Naive thymus-derived CD4-positive, alpha-beta T cell (primary cell): ENCODE measurements at regions of chr16 and their contacts with region 1.

Region 1: DNA sequence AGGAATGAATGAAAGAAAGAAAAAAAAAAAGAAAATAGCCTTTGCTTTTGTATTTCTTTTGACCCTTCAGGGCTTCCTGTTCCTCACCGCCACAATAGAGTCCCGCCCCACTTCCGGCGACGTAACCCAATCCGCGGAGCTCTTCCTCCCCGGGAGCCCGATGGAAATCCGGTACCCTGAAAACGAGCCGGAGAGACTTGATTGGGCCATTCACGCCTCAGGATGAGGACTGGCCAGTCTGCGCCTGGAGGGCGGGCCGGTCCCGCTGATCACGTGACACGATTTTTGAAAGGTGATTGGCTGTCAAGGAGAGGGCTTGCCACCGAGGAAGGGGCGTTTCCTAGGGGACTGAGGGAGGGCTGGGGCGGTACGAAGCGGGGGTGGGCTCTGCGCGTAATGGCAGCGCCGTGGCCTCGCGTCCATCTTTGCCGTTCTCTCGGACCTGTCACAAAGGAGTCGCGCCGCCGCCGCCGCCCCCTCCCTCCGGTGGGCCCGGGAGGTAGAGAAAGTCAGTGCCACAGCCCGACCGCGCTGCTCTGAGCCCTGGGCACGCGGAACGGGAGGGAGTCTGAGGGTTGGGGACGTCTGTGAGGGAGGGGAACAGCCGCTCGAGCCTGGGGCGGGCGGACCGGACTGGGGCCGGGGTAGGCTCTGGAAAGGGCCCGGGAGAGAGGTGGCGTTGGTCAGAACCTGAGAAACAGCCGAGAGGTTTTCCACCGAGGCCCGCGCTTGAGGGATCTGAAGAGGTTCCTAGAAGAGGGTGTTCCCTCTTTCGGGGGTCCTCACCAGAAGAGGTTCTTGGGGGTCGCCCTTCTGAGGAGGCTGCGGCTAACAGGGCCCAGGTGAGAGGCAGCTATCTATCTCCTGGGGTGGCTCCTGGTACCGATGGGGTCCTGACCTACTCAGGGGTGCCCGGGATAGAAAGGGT is at the starts of genes PSME3IP1 and RSPRY1:
- DNase-seq: peak; percentile 86 to 100 (median 99)
- ATAC-seq: peak; percentile 92
- H3K4me3 ChIP-seq: peak within 1 kb of the TSS; percentile 95
- H3K4me3 Mint-ChIP-seq: peak within 1 kb of the TSS; percentile 93 to 100 (median 98)
- H3K27ac ChIP-seq: peak within 1 kb of the TSS; percentile 94
- H3K27ac Mint-ChIP-seq: peak within 1 kb of the TSS; percentile 93 to 99 (median 95)
- H3K4me1 ChIP-seq: peaks cover 20 to 24% of the 10 kb centered on the region in 2 donors
- H3K4me1 Mint-ChIP-seq: peaks cover 41 to 77% (median 59%) of the 10 kb centered on the region in 7 donors
- H3K27me3 ChIP-seq: no peaks in the 10 kb centered on the region
- H3K27me3 Mint-ChIP-seq: peaks cover 0 to 3% (median 0%) of the 10 kb centered on the region in 5 donors
- total RNA-seq, gene PSME3IP1: 109 to 159 (median 140) TPM
- total RNA-seq, gene RSPRY1: 24.1 to 40.5 (median 33.6) TPM

Region 2: DNA sequence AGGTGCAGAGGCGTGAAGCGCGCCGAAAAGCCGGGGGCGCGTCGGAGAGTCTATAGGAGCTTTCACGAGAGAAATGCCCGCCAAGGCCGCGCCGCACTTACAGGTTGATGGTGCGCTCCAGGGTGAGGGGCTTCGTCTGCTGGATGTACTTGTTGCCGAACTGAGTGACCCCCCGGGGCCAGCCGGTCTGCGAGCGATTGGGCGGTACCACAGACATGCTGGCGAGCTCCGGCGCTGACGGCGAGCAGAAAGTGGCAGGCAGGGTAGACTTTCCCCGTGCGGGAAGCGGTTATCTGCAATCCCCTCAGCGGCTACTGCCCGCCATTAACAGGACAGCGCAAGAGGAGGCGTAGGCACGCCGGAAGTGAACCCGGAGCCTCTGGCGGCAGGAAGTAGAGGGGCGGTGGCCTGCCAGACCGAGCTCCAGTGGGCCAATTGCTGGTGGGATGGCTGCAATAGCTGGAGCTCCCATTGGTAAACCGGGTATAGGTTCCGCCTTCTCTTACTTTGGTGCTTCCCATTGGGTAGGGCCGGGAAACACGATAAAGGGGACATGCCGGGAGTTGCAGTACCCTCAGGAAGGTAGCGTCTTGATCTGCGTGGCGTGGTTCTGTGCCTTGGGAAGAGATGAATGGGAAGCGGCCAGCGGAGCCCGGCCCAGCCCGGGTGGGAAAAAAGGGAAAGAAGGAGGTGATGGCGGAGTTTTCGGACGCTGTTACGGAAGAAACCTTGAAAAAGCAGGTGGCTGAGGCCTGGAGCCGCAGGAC is 735.0 kb before region 1 on chr16 and contains the starts of genes NUDT21 and OGFOD1:
- CTCF ChIA-PET with region 1: no interaction called
- POLR2A ChIA-PET with region 1: interaction called, 4 read pairs
- intact Hi-C with region 1: loop called in 1 of 2 experiments (anchors 5 kb)
- DNase-seq: peak; percentile 67 to 96 (median 93)
- ATAC-seq: peak; percentile 99
- H3K4me3 ChIP-seq: peak within 1 kb of the TSS; percentile 96
- H3K4me3 Mint-ChIP-seq: peak within 1 kb of the TSS; percentile 94 to 100 (median 97)
- H3K27ac ChIP-seq: peak within 1 kb of the TSS; percentile 92
- H3K27ac Mint-ChIP-seq: peak within 1 kb of the TSS; percentile 92 to 98 (median 93)
- H3K4me1 ChIP-seq: peaks cover 24 to 42% of the 10 kb centered on the region in 2 donors
- H3K4me1 Mint-ChIP-seq: peaks cover 50 to 77% (median 64%) of the 10 kb centered on the region in 7 donors
- H3K27me3 ChIP-seq: no peaks in the 10 kb centered on the region
- H3K27me3 Mint-ChIP-seq: no peaks in the 10 kb centered on the region
- total RNA-seq, gene NUDT21: 74.0 to 191 (median 97.5) TPM
- total RNA-seq, gene OGFOD1: 23.8 to 51.8 (median 42.1) TPM

Region 3: GRCh38 chr16:56729735-56730662 is 456.2 kb before region 1 on chr16 and contains the start of gene NUP93:
- CTCF ChIA-PET with region 1: no interaction called
- POLR2A ChIA-PET with region 1: no interaction called
- intact Hi-C with region 1: loop called in 1 of 2 experiments (anchors 10 kb)
- DNase-seq: peak; percentile 76 to 90 (median 88)
- ATAC-seq: peak; percentile 99
- H3K4me3 ChIP-seq: peak within 1 kb of the TSS; percentile 82
- H3K4me3 Mint-ChIP-seq: peak within 1 kb of the TSS in 1 of 10 donors; percentile 90
- H3K27ac ChIP-seq: peak within 1 kb of the TSS; percentile 84
- H3K27ac Mint-ChIP-seq: peak within 1 kb of the TSS in 7 of 9 donors; percentile 82 to 98 (median 94)
- H3K4me1 ChIP-seq: peaks cover 22 to 23% of the 10 kb centered on the region in 2 donors
- H3K4me1 Mint-ChIP-seq: peaks cover 10 to 31% (median 26%) of the 10 kb centered on the region in 7 donors
- H3K27me3 ChIP-seq: no peaks in the 10 kb centered on the region
- H3K27me3 Mint-ChIP-seq: no peaks in the 10 kb centered on the region
- total RNA-seq, gene NUP93: 53.0 to 90.5 (median 58.3) TPM

Region 4: DNA sequence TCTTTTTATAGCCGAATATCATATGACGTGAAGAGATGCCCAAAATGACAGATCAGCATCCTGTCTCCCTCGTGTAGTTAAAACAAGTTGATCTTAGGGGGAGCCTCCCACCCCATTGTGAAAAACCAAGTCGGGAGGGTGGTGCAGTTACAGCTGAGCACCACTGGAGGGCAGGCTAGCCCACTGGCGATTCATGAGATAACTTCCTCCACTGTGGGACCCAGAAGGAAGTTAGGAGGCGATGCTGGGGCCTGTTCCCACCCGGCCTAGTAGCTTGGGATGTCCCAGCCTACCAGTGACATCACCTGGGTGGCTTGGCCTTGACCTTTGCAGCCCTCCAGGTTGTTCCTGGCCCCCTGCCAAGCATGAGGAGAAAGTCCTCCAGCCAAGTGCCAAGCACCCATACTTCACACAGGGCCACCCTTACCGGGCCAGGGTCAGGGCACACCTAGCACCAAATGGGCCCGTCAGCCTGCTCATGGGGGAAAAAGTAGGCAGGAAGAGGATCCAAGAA is 101.9 kb before region 1 on chr16:
- CTCF ChIA-PET with region 1: interaction called, 3 read pairs
- POLR2A ChIA-PET with region 1: interaction called, 6 read pairs
- intact Hi-C with region 1: loop called in 1 of 2 experiments (anchors 1 kb)
- DNase-seq: peak; percentile 52 to 86 (median 80)
- ATAC-seq: peak; percentile 98
- H3K4me3 ChIP-seq: no peak overlapping the region
- H3K4me3 Mint-ChIP-seq: peak overlapping the region in 2 of 10 donors; percentile 3 to 37
- H3K27ac ChIP-seq: peak overlapping the region; percentile 72
- H3K27ac Mint-ChIP-seq: peak overlapping the region; percentile 19 to 97 (median 90)
- H3K4me1 ChIP-seq: peaks cover 11% of the 10 kb centered on the region in 2 donors
- H3K4me1 Mint-ChIP-seq: peaks cover 6 to 16% (median 14%) of the 10 kb centered on the region in 7 donors
- H3K27me3 ChIP-seq: no peaks in the 10 kb centered on the region
- H3K27me3 Mint-ChIP-seq: no peaks in the 10 kb centered on the region

Region 5: GRCh38 chr16:57284208-57284951 is 98.2 kb after region 1 on chr16 and contains the start of gene PLLP:
- CTCF ChIA-PET with region 1: no interaction called
- POLR2A ChIA-PET with region 1: no interaction called
- intact Hi-C with region 1: loop called in 1 of 2 experiments (anchors 2 kb)
- DNase-seq: peak; percentile 30 to 66 (median 51)
- ATAC-seq: peak; percentile 82
- H3K4me3 ChIP-seq: peak within 1 kb of the TSS; percentile 60
- H3K4me3 Mint-ChIP-seq: peak within 1 kb of the TSS; percentile 77 to 89 (median 84)
- H3K27ac ChIP-seq: peak within 1 kb of the TSS; percentile 59
- H3K27ac Mint-ChIP-seq: peak within 1 kb of the TSS in 8 of 9 donors; percentile 10 to 94 (median 64)
- H3K4me1 ChIP-seq: peaks cover 0 to 25% of the 10 kb centered on the region in 2 donors
- H3K4me1 Mint-ChIP-seq: peaks cover 20 to 51% (median 41%) of the 10 kb centered on the region in 7 donors
- H3K27me3 ChIP-seq: peaks cover 0 to 8% of the 10 kb centered on the region in 2 donors
- H3K27me3 Mint-ChIP-seq: peaks cover 0 to 41% (median 0%) of the 10 kb centered on the region in 5 donors
- total RNA-seq, gene PLLP: 0.36 to 8.4 (median 3.3) TPM

Region 6: DNA sequence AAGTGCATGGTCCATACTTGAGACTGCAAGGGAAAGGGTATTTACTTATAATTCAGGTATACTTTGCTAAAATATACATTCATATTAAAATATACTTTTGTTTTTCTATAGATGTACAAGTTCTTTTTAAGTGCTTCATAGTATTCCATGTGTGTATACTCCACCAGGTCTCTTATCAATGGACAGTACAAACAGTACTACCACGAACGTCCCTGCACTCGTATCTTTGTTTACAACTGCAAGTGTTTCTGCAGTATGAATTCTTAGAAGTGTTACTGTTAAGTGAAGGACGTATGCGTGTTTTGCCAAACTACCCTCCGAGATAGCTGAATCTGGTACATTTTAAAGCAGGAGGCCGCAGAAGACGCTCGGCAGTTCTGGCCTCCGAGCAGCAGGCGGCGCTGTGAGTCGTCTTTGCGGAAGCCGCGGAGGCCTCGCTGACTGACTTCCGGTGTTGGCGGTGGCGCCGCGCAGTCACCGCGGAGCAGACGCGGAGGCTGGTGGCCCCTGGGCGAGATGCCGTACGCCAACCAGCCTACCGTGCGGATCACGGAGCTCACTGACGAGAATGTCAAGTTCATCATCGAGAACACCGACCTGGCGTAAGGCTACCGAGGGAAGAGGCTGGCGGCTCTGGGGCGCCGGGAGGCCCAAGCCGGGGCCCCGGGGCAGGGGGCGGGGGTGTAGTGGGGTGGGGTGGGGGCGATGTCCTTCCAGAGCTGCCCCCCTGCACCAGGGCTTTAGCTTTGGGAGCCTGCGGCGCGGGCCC is 276.2 kb after region 1 on chr16 and contains the start of gene POLR2C:
- CTCF ChIA-PET with region 1: no interaction called
- POLR2A ChIA-PET with region 1: no interaction called
- intact Hi-C with region 1: loop called in 1 of 2 experiments (anchors 1 kb)
- DNase-seq: peak; percentile 84 to 96 (median 92)
- ATAC-seq: peak; percentile 99
- H3K4me3 ChIP-seq: peak within 1 kb of the TSS; percentile 86
- H3K4me3 Mint-ChIP-seq: peak within 1 kb of the TSS; percentile 79 to 100 (median 98)
- H3K27ac ChIP-seq: peak within 1 kb of the TSS; percentile 77
- H3K27ac Mint-ChIP-seq: peak within 1 kb of the TSS; percentile 93 to 100 (median 99)
- H3K4me1 ChIP-seq: peaks cover 17 to 23% of the 10 kb centered on the region in 2 donors
- H3K4me1 Mint-ChIP-seq: peaks cover 19 to 45% (median 35%) of the 10 kb centered on the region in 7 donors
- H3K27me3 ChIP-seq: no peaks in the 10 kb centered on the region
- H3K27me3 Mint-ChIP-seq: no peaks in the 10 kb centered on the region
- total RNA-seq, gene POLR2C: 63.4 to 96.3 (median 81.4) TPM

Region 7: DNA sequence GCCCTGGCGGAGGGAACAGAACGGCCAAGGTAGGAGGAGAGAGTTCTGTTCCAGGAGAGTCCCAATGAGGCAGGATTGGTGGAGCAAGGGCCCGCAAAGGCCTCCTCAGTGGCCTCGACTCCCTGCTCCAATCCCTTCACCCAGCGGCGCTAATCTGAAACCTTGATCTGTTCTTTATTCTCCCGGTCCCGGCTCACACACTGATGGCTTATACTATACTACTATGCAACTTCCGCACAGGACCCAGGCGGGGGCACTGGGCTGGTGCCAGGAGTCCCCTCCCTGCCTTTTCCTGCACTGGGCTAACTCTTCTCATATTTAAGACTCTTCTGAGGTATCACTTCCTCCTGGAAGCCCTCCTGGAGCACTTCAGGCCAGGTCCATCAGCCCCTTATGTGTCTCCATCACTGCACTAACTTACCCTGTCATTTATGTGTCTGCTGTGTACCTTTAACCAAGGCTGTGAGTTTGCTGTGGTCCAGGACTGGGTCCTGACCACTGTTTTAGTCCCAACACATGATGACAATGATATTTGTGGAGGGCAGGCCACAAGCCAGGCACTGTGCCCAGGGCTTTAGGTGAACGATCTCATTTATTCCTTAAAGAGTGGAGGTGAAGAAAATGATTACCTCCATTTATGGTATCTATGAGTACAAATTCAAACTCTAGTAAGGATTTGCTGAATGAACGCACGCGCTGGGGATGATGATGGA is 343.3 kb after region 1 on chr16:
- CTCF ChIA-PET with region 1: no interaction called
- POLR2A ChIA-PET with region 1: no interaction called
- intact Hi-C with region 1: no loop called
- DNase-seq: no peak
- ATAC-seq: no peak
- H3K4me3 ChIP-seq: no peak overlapping the region
- H3K4me3 Mint-ChIP-seq: peak overlapping the region; percentile 61 to 88 (median 83)
- H3K27ac ChIP-seq: peak overlapping the region; percentile 87
- H3K27ac Mint-ChIP-seq: peak overlapping the region; percentile 85 to 99 (median 96)
- H3K4me1 ChIP-seq: peaks cover 35 to 49% of the 10 kb centered on the region in 2 donors
- H3K4me1 Mint-ChIP-seq: peaks cover 49 to 58% (median 54%) of the 10 kb centered on the region in 7 donors
- H3K27me3 ChIP-seq: no peaks in the 10 kb centered on the region
- H3K27me3 Mint-ChIP-seq: no peaks in the 10 kb centered on the region